Naive thymus-derived CD4-positive, alpha-beta T cell (primary cell): ENCODE measurements at regions of chr17 and their contacts with region 1.

Region 1: GRCh38 chr17:73231841-73232586 is 29.7 kb downstream of the CPSF4L start:
- DNase-seq: peak; percentile 93 to 99 (median 96)
- ATAC-seq: peak; percentile 98
- H3K4me3 ChIP-seq: peak overlapping the region; percentile 87
- H3K4me3 Mint-ChIP-seq: peak overlapping the region; percentile 90 to 98 (median 95)
- H3K27ac ChIP-seq: peak overlapping the region; percentile 86
- H3K27ac Mint-ChIP-seq: peak overlapping the region; percentile 92 to 98 (median 96)
- H3K4me1 ChIP-seq: peaks cover 20 to 32% of the 10 kb centered on the region in 2 donors
- H3K4me1 Mint-ChIP-seq: peaks cover 52 to 81% (median 70%) of the 10 kb centered on the region in 7 donors
- H3K27me3 ChIP-seq: no peaks in the 10 kb centered on the region
- H3K27me3 Mint-ChIP-seq: no peaks in the 10 kb centered on the region

Region 2: GRCh38 chr17:72556944-72557826 is 674.8 kb before region 1 on chr17:
- CTCF ChIA-PET with region 1: no interaction called
- POLR2A ChIA-PET with region 1: no interaction called
- intact Hi-C with region 1: loop called in 1 of 2 experiments (anchors 10 kb)
- DNase-seq: peak in 8 of 9 donors; percentile 25 to 59 (median 42)
- ATAC-seq: peak; percentile 64
- H3K4me3 ChIP-seq: no peak overlapping the region
- H3K4me3 Mint-ChIP-seq: no peak overlapping the region
- H3K27ac ChIP-seq: no peak overlapping the region
- H3K27ac Mint-ChIP-seq: no peak overlapping the region
- H3K4me1 ChIP-seq: no peaks in the 10 kb centered on the region
- H3K4me1 Mint-ChIP-seq: peaks cover 0 to 2% (median 0%) of the 10 kb centered on the region in 7 donors
- H3K27me3 ChIP-seq: no peaks in the 10 kb centered on the region
- H3K27me3 Mint-ChIP-seq: peaks cover 0 to 5% (median 4%) of the 10 kb centered on the region in 5 donors

Region 3: DNA sequence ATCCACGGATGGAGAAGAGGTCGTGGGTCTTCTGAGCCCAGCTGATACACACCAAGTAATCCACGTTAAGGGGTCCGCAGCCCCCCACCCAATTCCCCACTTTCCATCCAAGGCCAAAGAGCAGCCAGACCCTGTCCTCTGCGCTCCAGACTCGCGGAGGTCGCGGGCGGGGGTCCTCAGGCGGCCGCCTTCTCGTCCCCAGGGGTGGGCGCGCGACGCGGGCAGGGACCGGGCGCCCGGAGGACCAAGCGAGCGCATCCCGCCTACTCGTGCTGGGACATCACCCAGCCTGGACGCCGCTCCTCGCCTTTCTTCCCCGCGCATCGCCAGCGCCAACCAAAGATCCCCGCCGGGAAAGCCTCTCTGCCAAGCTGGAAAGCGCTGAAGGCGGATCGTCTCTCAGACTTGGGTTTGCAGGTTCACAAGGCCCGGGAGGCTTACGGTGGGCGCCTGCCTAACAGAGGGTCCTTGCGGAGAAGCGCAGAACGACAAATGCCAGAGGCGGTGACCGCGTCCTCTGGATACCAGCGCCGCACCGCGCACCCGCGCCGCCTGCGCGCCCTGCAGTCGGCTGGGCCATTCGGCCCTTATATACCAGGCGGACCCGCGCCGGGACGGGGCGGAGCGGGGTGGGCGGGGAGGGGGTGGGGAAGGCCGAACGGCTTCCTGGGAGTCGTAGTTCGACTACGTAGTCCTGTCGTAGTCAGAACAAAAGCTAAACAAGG is 639.6 kb before region 1 on chr17:
- CTCF ChIA-PET with region 1: no interaction called
- POLR2A ChIA-PET with region 1: no interaction called
- intact Hi-C with region 1: loop called in 1 of 2 experiments (anchors 1 kb)
- DNase-seq: peak in 5 of 9 donors; percentile 6 to 77 (median 37)
- ATAC-seq: peak; percentile 79
- H3K4me3 ChIP-seq: peak overlapping the region; percentile 35
- H3K4me3 Mint-ChIP-seq: peak overlapping the region; percentile 78 to 97 (median 86)
- H3K27ac ChIP-seq: no peak overlapping the region
- H3K27ac Mint-ChIP-seq: peak overlapping the region in 3 of 9 donors; percentile 33 to 71 (median 50)
- H3K4me1 ChIP-seq: peaks cover 6 to 10% of the 10 kb centered on the region in 2 donors
- H3K4me1 Mint-ChIP-seq: peaks cover 13 to 33% (median 25%) of the 10 kb centered on the region in 7 donors
- H3K27me3 ChIP-seq: no peaks in the 10 kb centered on the region
- H3K27me3 Mint-ChIP-seq: peaks cover 46 to 66% (median 53%) of the 10 kb centered on the region in 5 donors

Region 4: GRCh38 chr17:73092523-73093135 is 139.4 kb before region 1 on chr17 and contains the start of gene SLC39A11:
- CTCF ChIA-PET with region 1: interaction called, 3 read pairs
- POLR2A ChIA-PET with region 1: no interaction called
- intact Hi-C with region 1: loop called (anchors 1 kb)
- DNase-seq: peak; percentile 77 to 92 (median 85)
- ATAC-seq: peak; percentile 99
- H3K4me3 ChIP-seq: peak within 1 kb of the TSS; percentile 69
- H3K4me3 Mint-ChIP-seq: peak within 1 kb of the TSS; percentile 90 to 100 (median 96)
- H3K27ac ChIP-seq: peak within 1 kb of the TSS; percentile 63
- H3K27ac Mint-ChIP-seq: peak within 1 kb of the TSS; percentile 87 to 99 (median 93)
- H3K4me1 ChIP-seq: peaks cover 7 to 20% of the 10 kb centered on the region in 2 donors
- H3K4me1 Mint-ChIP-seq: peaks cover 0 to 40% (median 32%) of the 10 kb centered on the region in 7 donors
- H3K27me3 ChIP-seq: no peaks in the 10 kb centered on the region
- H3K27me3 Mint-ChIP-seq: peaks cover 0 to 13% (median 0%) of the 10 kb centered on the region in 5 donors
- total RNA-seq, gene SLC39A11: 16.9 to 36.7 (median 21.6) TPM

Region 5: DNA sequence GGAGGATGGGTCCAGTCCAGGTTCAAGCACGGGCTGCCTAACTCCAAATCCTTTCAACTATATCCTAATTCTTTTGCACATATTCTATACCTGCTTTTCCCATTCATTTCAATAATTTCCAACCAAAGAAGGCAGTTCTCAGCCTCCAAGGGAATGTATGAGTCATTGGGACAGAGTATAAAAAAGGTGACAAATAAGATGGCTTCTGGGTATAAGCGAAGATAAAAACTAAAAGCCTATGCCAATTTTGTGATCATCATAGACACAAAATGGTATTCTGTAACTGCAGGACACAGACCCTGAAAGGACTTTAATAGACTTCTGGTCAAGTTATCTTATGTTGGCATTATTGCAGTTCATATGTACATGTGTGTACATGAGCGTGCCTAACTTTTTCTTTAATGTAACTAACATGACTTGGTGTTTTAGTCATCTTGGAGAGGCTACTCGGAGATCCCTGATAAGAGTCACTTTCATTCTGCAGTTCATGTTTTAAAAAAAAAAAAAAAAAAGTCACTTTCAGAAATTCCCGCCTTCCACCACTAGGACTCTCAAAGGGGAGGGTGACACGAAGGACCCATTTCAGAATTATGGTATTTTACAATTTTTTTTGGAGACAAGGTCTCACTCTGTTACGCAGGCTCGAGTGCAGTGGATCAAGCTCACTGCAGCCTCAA is 21.9 kb before region 1 on chr17:
- CTCF ChIA-PET with region 1: interaction called, 5 read pairs
- POLR2A ChIA-PET with region 1: interaction called, 21 read pairs
- intact Hi-C with region 1: loop called (anchors 1 to 2 kb)
- DNase-seq: peak in 4 of 9 donors; percentile 15 to 40 (median 22)
- ATAC-seq: peak; percentile 30
- H3K4me3 ChIP-seq: no peak overlapping the region
- H3K4me3 Mint-ChIP-seq: peak overlapping the region in 2 of 10 donors; percentile 11 to 13
- H3K27ac ChIP-seq: peak overlapping the region; percentile 53
- H3K27ac Mint-ChIP-seq: peak overlapping the region; percentile 61 to 95 (median 77)
- H3K4me1 ChIP-seq: peaks cover 4 to 10% of the 10 kb centered on the region in 2 donors
- H3K4me1 Mint-ChIP-seq: peaks cover 8 to 44% (median 23%) of the 10 kb centered on the region in 7 donors
- H3K27me3 ChIP-seq: no peaks in the 10 kb centered on the region
- H3K27me3 Mint-ChIP-seq: no peaks in the 10 kb centered on the region

Region 6: DNA sequence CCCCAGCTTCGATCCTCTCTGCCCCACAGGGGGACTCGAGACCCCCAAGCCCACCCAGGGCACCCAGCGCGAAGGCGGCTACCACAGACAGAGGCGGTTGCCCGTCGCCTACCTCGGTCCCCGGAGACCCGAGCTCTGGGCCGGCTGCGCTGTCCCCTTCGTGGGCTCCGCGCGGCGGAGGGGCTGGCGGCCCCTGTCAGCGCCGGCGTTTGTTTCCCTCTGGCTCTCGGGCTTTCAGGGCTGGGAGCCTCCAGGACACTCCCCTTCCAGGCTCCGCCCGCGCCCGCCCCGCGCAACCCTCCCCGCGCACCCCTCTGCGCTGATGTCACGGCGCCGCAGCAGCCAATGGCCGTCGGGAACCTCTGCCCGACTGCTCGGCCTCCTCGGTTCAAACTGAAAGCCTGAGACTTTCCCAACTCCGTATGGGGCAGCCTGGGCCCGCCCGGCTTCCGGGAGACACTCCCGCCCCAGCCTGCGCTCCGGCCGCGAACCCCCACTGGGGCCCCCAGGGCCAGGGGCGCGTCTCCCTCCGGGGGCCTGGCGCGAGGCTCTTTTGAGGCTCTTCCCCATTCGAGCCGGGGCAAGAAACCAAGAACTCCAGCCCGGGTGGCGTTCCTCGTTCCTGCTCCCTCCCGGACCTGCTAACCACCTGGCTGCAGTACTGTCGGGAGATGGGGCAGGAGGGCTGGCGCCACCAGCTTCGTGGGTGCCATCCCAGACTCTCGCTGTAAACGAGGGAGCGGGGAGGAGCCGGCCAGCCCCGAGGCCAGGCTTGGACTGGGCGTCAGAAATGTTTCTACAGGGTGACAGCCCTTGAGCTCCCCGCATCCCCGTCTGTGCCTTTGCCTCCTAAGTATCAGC is 80.0 kb after region 1 on chr17 and contains the start of gene CDC42EP4:
- CTCF ChIA-PET with region 1: no interaction called
- POLR2A ChIA-PET with region 1: no interaction called
- intact Hi-C with region 1: loop called (anchors 1 kb)
- DNase-seq: peak; percentile 70 to 89 (median 76)
- ATAC-seq: peak; percentile 94
- H3K4me3 ChIP-seq: peak within 1 kb of the TSS; percentile 80
- H3K4me3 Mint-ChIP-seq: peak within 1 kb of the TSS; percentile 84 to 91 (median 88)
- H3K27ac ChIP-seq: peak within 1 kb of the TSS; percentile 75
- H3K27ac Mint-ChIP-seq: peak within 1 kb of the TSS in 8 of 9 donors; percentile 5 to 86 (median 62)
- H3K4me1 ChIP-seq: peaks cover 9 to 10% of the 10 kb centered on the region in 2 donors
- H3K4me1 Mint-ChIP-seq: peaks cover 8 to 19% (median 13%) of the 10 kb centered on the region in 7 donors
- H3K27me3 ChIP-seq: no peaks in the 10 kb centered on the region
- H3K27me3 Mint-ChIP-seq: peaks cover 0 to 13% (median 0%) of the 10 kb centered on the region in 5 donors
- total RNA-seq, gene CDC42EP4: 1.4 to 15.8 (median 2.0) TPM

Region 7: DNA sequence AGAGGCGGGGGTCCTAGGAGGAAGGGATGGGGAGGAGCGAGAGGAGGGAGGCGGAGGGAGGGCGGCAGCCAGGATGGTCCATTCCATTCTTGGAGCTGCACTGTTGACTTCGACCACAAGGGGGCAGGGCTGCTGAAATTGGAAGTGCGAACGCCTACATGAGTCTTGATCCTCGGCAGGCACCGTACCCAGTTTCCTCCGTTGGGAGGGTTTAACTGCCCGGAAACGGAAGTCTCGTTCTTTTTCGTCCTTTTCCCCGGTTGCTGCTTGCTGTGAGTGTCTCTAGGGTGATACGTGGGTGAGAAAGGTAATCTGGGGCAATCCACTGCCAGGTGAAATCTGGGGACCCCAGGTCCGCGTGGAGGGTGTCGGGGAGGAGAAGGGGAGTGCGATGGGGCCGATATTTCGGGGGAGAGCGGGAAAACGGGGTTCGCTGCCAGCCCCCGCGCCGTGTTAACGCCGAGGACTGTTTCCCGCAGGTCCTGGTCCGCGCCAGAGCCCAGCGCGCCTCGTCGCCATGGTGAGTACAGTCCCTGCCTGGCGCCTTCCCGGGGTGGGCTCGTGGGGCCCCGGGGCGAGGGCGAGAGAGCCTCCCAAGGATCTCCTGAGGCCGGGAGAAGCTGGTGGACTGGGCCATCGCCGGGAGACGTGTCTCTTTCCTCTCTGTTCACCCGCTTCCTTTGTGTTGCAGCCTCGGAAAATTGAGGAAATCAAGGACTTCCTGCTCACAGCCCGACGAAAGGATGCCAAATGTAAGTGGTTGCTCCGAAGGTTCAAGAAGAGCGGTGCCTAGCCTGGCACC is 971.6 kb after region 1 on chr17 and contains the start of gene RPL38:
- CTCF ChIA-PET with region 1: no interaction called
- POLR2A ChIA-PET with region 1: no interaction called
- intact Hi-C with region 1: loop called in 1 of 2 experiments (anchors 10 kb)
- DNase-seq: peak; percentile 83 to 95 (median 94)
- ATAC-seq: peak; percentile 98
- H3K4me3 ChIP-seq: peak within 1 kb of the TSS; percentile 89
- H3K4me3 Mint-ChIP-seq: peak within 1 kb of the TSS; percentile 85 to 100 (median 98)
- H3K27ac ChIP-seq: peak within 1 kb of the TSS; percentile 86
- H3K27ac Mint-ChIP-seq: peak within 1 kb of the TSS; percentile 89 to 98 (median 96)
- H3K4me1 ChIP-seq: peaks cover 16 to 20% of the 10 kb centered on the region in 2 donors
- H3K4me1 Mint-ChIP-seq: peaks cover 24 to 49% (median 34%) of the 10 kb centered on the region in 7 donors
- H3K27me3 ChIP-seq: peaks cover 0 to 5% of the 10 kb centered on the region in 2 donors
- H3K27me3 Mint-ChIP-seq: peaks cover 8 to 16% (median 11%) of the 10 kb centered on the region in 5 donors
- total RNA-seq, gene RPL38: 1,097 to 2,553 (median 2,002) TPM